CD4-positive, alpha-beta T cell (primary cell): ENCODE measurements at regions of chr17 and their contacts with region 1.

Region 1: DNA sequence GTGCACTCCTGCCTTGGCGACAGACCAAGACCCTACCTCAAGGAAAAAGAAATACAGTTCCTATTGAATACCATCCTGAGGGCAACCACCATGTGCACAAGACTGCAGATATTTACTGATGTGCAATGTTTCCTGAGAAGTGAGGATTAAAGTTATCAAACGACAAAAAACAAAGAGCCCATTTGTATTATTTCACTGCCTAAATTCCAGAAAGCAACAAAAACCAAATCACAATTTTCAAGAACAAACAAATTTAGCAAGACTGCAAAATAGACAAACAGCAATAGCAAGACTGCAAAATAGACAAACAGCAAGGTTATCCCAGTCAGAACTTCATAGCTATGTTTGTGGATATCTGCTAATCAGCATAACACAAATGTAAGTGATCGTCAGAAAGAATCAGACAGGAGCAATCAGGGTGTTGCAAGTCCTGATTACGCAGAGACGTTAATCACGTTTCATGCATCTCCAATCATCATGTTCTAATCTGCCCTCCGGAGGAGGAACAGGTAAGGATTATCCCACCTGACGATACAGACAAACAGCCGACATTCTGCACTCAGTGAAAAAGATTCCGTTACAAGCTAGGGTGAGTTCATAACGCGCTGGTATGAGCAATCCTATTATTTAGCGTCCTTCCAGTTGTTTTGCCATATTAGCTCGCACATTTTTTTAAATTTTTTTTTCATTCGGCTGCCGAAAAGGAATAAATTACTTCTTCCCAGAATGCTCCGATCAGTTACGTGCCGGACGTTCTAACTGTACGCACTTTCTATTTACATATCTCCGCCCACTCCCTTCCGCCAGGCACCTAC is 2.9 kb downstream of the TMEM107 start:
- DNase-seq: peak in 13 of 14 experiments; percentile 56 to 95 (median 70)
- ATAC-seq: peak; percentile 81
- H3K4me3 ChIP-seq: peak overlapping the region; percentile 49
- H3K4me3 Mint-ChIP-seq: peak overlapping the region; percentile 90
- H3K27ac ChIP-seq: peak overlapping the region; percentile 95 to 98
- H3K27ac Mint-ChIP-seq: peak overlapping the region; percentile 99
- H3K4me1 ChIP-seq: peaks cover 48% of the 10 kb centered on the region
- H3K4me1 Mint-ChIP-seq: peaks cover 51% of the 10 kb centered on the region
- H3K27me3 ChIP-seq: no peaks in the 10 kb centered on the region
- H3K27me3 Mint-ChIP-seq: no peaks in the 10 kb centered on the region
- CTCF ChIP-seq: no peak

Region 2: DNA sequence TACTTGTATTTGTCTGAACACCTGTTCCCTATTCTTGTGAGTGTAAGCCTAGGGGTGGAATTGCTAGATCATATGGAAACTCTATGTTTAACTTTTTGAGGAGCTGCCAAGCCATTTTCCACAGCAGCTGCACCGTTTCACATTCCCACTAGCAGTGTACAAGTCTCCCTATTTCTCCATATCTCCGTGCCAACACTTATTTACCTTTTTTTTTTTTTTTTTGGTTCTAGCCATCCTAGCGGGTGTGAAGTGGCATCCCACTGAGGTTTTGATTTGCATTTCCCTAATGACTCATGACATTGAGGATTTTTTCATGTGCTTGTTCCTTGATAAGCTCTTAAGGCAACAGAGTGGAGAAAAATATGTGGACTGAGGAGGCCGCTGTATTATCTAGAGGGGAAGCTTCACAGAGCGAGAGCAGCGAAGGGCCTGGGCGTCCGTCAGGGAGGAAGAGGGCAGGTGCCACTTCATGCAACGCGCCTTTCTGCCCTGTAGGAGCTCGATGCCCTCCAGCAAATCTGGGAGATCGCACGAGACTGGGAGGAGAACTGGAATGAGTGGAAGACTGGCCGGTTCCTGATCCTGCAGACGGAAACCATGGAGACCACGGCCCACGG is 405.8 kb before region 1 on chr17:
- CTCF ChIA-PET with region 1: no interaction called
- POLR2A ChIA-PET with region 1: no interaction called
- intact Hi-C with region 1: no loop called
- DNase-seq: no peak
- ATAC-seq: no peak
- H3K4me3 ChIP-seq: no peak overlapping the region
- H3K4me3 Mint-ChIP-seq: no peak overlapping the region
- H3K27ac ChIP-seq: no peak overlapping the region
- H3K27ac Mint-ChIP-seq: no peak overlapping the region
- H3K4me1 ChIP-seq: no peaks in the 10 kb centered on the region
- H3K4me1 Mint-ChIP-seq: no peaks in the 10 kb centered on the region
- H3K27me3 ChIP-seq: no peaks in the 10 kb centered on the region
- H3K27me3 Mint-ChIP-seq: peaks cover 24% of the 10 kb centered on the region
- CTCF ChIP-seq: no peak

Region 3: GRCh38 chr17:8156246-8156992 is 16.8 kb before region 1 on chr17:
- CTCF ChIA-PET with region 1: interaction called, 4 read pairs
- POLR2A ChIA-PET with region 1: interaction called, 419 read pairs
- intact Hi-C with region 1: loop called in 1 of 2 experiments (anchors 1 kb)
- DNase-seq: peak; percentile 99 to 100 (median 100)
- ATAC-seq: peak; percentile 70
- H3K4me3 ChIP-seq: peak overlapping the region; percentile 86
- H3K4me3 Mint-ChIP-seq: no peak overlapping the region
- H3K27ac ChIP-seq: peak overlapping the region; percentile 99 to 100
- H3K27ac Mint-ChIP-seq: no peak overlapping the region
- H3K4me1 ChIP-seq: peaks cover 88% of the 10 kb centered on the region
- H3K4me1 Mint-ChIP-seq: peaks cover 73% of the 10 kb centered on the region
- H3K27me3 ChIP-seq: no peaks in the 10 kb centered on the region
- H3K27me3 Mint-ChIP-seq: peaks cover 3% of the 10 kb centered on the region
- CTCF ChIP-seq: no peak

Region 4: GRCh38 chr17:8162233-8162996 is 10.8 kb before region 1 on chr17 and contains the start of gene VAMP2:
- CTCF ChIA-PET with region 1: interaction called, 4 read pairs
- POLR2A ChIA-PET with region 1: interaction called, 419 read pairs
- intact Hi-C with region 1: loop called (anchors 1 kb)
- DNase-seq: peak; percentile 71 to 95 (median 83)
- ATAC-seq: peak; percentile 47
- H3K4me3 ChIP-seq: peak within 1 kb of the TSS; percentile 86
- H3K4me3 Mint-ChIP-seq: peak within 1 kb of the TSS; percentile 95
- H3K27ac ChIP-seq: peak within 1 kb of the TSS; percentile 94 to 96
- H3K27ac Mint-ChIP-seq: no peak within 1 kb of the TSS
- H3K4me1 ChIP-seq: peaks cover 72% of the 10 kb centered on the region
- H3K4me1 Mint-ChIP-seq: peaks cover 67% of the 10 kb centered on the region
- H3K27me3 ChIP-seq: no peaks in the 10 kb centered on the region
- H3K27me3 Mint-ChIP-seq: no peaks in the 10 kb centered on the region
- CTCF ChIP-seq: no peak
- total RNA-seq, gene VAMP2: 351 to 366 TPM

Region 5: DNA sequence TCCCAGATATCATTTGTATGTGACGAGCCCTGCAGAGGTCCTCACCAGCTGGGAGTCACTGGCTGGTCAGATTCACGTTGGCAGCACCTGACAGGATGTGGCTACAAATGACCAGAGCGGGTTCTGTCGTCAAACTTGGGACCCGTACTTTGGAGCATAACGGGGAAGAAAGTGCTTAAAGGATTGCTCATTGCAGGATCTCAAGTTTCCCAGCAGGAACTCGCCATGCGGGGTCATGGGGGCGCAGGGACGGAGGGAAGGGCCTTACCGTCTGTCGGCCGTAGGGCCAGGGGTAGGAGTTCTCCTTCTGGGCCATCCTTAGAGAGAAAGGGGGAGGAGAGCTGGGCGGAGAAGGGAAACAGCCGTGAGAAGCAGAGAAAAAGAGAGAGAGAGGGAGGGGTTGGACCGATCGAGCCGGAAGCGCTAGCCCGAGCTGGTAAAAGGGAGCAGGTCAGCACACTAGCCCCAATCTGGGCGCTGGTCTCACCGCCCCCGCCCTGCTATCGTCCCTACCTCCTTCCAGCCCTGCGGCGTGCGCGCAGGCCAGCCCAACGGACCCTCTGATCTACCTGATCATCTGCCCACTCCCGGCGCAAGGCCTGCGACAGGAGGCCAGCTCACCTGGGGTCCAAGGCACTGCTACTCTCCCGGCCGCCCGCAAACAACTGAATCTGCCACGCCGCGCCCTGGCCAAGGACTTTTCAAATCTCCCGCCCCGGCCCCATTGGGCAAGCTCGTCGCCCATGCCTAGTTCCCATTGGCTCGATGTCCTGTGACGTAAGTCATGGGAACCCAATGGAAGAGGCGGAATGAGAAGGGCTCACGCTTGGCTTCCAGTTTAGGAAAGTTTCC is 36.9 kb after region 1 on chr17 and contains the start of gene AURKB:
- CTCF ChIA-PET with region 1: no interaction called
- POLR2A ChIA-PET with region 1: interaction called, 11 read pairs
- intact Hi-C with region 1: no loop called
- DNase-seq: peak; percentile 84 to 97 (median 90)
- ATAC-seq: peak; percentile 100
- H3K4me3 ChIP-seq: peak within 1 kb of the TSS; percentile 76
- H3K4me3 Mint-ChIP-seq: peak within 1 kb of the TSS; percentile 90
- H3K27ac ChIP-seq: peak within 1 kb of the TSS; percentile 40 to 50
- H3K27ac Mint-ChIP-seq: peak within 1 kb of the TSS; percentile 27
- H3K4me1 ChIP-seq: peaks cover 16% of the 10 kb centered on the region
- H3K4me1 Mint-ChIP-seq: peaks cover 19% of the 10 kb centered on the region
- H3K27me3 ChIP-seq: no peaks in the 10 kb centered on the region
- H3K27me3 Mint-ChIP-seq: no peaks in the 10 kb centered on the region
- CTCF ChIP-seq: no peak
- total RNA-seq, gene AURKB: 0.56 to 1.4 TPM

Region 6: DNA sequence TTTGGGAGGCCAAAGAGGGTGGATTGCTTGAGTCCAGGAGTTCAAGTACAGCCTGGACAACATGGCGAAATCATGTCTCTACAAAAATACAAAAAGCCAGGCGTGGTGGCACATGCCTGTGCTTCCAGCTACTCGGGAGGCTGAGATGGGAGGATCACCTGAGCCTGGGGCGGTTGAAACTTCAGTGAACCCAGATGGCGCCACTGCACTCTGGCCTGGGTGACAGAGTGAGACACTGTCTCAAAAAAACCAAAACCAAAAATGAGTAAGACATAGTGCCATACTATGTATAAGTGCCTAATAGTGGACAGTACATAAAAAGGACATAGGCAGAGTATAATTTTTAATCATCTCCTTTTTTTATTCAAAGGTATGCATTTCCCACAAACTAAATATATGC is 70.6 kb after region 1 on chr17:
- CTCF ChIA-PET with region 1: interaction called, 4 read pairs
- POLR2A ChIA-PET with region 1: interaction called, 61 read pairs
- intact Hi-C with region 1: loop called in 1 of 2 experiments (anchors 5 kb)
- DNase-seq: peak in 7 of 14 experiments; percentile 22 to 60 (median 37)
- ATAC-seq: no peak
- H3K4me3 ChIP-seq: no peak overlapping the region
- H3K4me3 Mint-ChIP-seq: peak overlapping the region; percentile 83
- H3K27ac ChIP-seq: peak overlapping the region in 1 of 2 donors; percentile 36
- H3K27ac Mint-ChIP-seq: peak overlapping the region; percentile 100
- H3K4me1 ChIP-seq: peaks cover 57% of the 10 kb centered on the region
- H3K4me1 Mint-ChIP-seq: peaks cover 66% of the 10 kb centered on the region
- H3K27me3 ChIP-seq: no peaks in the 10 kb centered on the region
- H3K27me3 Mint-ChIP-seq: peaks cover 3% of the 10 kb centered on the region
- CTCF ChIP-seq: peak; percentile 24

Region 7: DNA sequence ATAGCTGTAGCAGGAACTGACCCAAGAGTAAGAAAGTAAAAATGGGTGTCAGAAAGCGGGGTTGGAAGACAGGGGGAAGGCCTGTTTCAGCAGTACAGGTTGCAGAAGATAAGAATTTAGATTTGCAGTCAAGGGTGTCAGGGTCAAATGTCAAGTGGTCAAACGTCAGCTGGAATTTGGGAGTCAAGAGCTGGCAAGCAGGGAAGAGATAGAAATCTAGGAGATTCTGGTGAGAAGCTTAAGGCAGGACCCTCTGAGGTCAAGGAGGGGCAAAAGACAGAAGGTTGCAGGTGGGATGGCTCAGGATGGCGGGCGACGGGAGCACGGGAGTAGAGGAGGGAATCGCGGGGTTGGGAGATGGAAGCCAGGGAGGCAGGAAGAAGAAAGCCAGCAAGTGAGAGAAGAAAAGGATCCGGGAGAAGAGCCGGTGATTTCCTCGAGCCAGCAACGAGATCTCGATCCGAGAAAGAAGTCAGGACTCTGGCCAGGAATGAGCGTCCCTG is 121.6 kb after region 1 on chr17:
- CTCF ChIA-PET with region 1: no interaction called
- POLR2A ChIA-PET with region 1: interaction called, 18 read pairs
- intact Hi-C with region 1: no loop called
- DNase-seq: no peak
- ATAC-seq: no peak
- H3K4me3 ChIP-seq: peak overlapping the region; percentile 72
- H3K4me3 Mint-ChIP-seq: peak overlapping the region; percentile 95
- H3K27ac ChIP-seq: peak overlapping the region; percentile 48 to 73
- H3K27ac Mint-ChIP-seq: peak overlapping the region; percentile 79
- H3K4me1 ChIP-seq: peaks cover 26% of the 10 kb centered on the region
- H3K4me1 Mint-ChIP-seq: peaks cover 39% of the 10 kb centered on the region
- H3K27me3 ChIP-seq: no peaks in the 10 kb centered on the region
- H3K27me3 Mint-ChIP-seq: no peaks in the 10 kb centered on the region
- CTCF ChIP-seq: no peak